ENCODE measurements at regions of chr16 and their contacts with region 1.

Region 1: DNA sequence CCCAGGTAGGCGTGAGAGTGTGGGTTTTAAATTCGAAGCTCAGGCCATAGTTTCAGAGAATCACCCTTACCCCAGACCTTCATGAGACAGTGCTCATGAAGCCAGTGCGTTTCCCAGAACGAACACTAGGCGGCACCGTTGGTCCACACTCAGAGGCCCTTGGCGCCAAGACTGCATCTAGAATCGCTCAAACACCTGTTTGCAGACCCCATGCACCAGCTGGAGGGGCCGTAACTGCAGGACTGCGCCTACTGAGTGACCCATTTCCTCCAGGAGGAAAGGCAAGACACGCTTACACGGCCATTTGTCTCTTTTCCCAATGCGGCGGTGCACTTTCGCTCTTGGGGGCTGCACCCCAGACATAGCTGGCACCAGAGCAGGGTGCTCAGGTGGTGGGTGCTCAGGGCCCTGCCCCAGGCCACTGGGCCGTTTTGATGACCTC is 34.0 kb downstream of the ADGRG5 start:
- DNase-seq: peak; percentile 69 to 79 (median 73)
- H3K4me3 ChIP-seq: no peak overlapping the region
- H3K4me3 Mint-ChIP-seq: peak overlapping the region in 2 of 8 donors; percentile 21 to 27
- H3K27ac ChIP-seq: no peak overlapping the region
- H3K27ac Mint-ChIP-seq: peak overlapping the region in 5 of 7 donors; percentile 6 to 65 (median 42)
- H3K4me1 ChIP-seq: peaks cover 30% of the 10 kb centered on the region
- H3K4me1 Mint-ChIP-seq: peaks cover 15 to 43% (median 31%) of the 10 kb centered on the region in 4 donors
- H3K27me3 ChIP-seq: no peaks in the 10 kb centered on the region
- H3K27me3 Mint-ChIP-seq: no peaks in the 10 kb centered on the region

Region 2: GRCh38 chr16:57128771-57129389 is 447.6 kb before region 1 on chr16:
- CTCF ChIA-PET with region 1: no interaction called
- POLR2A ChIA-PET with region 1: no interaction called
- intact Hi-C with region 1: no loop called
- DNase-seq: peak; percentile 28 to 70 (median 32)
- H3K4me3 ChIP-seq: no peak overlapping the region
- H3K4me3 Mint-ChIP-seq: peak overlapping the region in 7 of 8 donors; percentile 14 to 82 (median 66)
- H3K27ac ChIP-seq: peak overlapping the region; percentile 49
- H3K27ac Mint-ChIP-seq: peak overlapping the region; percentile 17 to 95 (median 79)
- H3K4me1 ChIP-seq: peaks cover 89% of the 10 kb centered on the region
- H3K4me1 Mint-ChIP-seq: peaks cover 49 to 97% (median 74%) of the 10 kb centered on the region in 4 donors
- H3K27me3 ChIP-seq: no peaks in the 10 kb centered on the region
- H3K27me3 Mint-ChIP-seq: no peaks in the 10 kb centered on the region

Region 3: GRCh38 chr16:57564571-57565270 is 11.7 kb before region 1 on chr16:
- CTCF ChIA-PET with region 1: interaction called, 25 read pairs
- POLR2A ChIA-PET with region 1: no interaction called
- intact Hi-C with region 1: no loop called
- DNase-seq: no peak
- H3K4me3 ChIP-seq: no peak overlapping the region
- H3K4me3 Mint-ChIP-seq: no peak overlapping the region
- H3K27ac ChIP-seq: no peak overlapping the region
- H3K27ac Mint-ChIP-seq: peak overlapping the region in 3 of 7 donors; percentile 18 to 41 (median 31)
- H3K4me1 ChIP-seq: no peaks in the 10 kb centered on the region
- H3K4me1 Mint-ChIP-seq: no peaks in the 10 kb centered on the region
- H3K27me3 ChIP-seq: no peaks in the 10 kb centered on the region
- H3K27me3 Mint-ChIP-seq: peaks cover 0 to 4% of the 10 kb centered on the region in 2 donors

Region 4: GRCh38 chr16:57600048-57600835 is 23.8 kb after region 1 on chr16:
- CTCF ChIA-PET with region 1: interaction called, 22 read pairs
- POLR2A ChIA-PET with region 1: interaction called, 4 read pairs
- intact Hi-C with region 1: no loop called
- DNase-seq: no peak
- H3K4me3 ChIP-seq: no peak overlapping the region
- H3K4me3 Mint-ChIP-seq: peak overlapping the region in 1 of 8 donors; percentile 50
- H3K27ac ChIP-seq: no peak overlapping the region
- H3K27ac Mint-ChIP-seq: peak overlapping the region in 6 of 7 donors; percentile 10 to 68 (median 44)
- H3K4me1 ChIP-seq: peaks cover 43% of the 10 kb centered on the region
- H3K4me1 Mint-ChIP-seq: peaks cover 23 to 59% (median 36%) of the 10 kb centered on the region in 4 donors
- H3K27me3 ChIP-seq: no peaks in the 10 kb centered on the region
- H3K27me3 Mint-ChIP-seq: no peaks in the 10 kb centered on the region

Region 5: DNA sequence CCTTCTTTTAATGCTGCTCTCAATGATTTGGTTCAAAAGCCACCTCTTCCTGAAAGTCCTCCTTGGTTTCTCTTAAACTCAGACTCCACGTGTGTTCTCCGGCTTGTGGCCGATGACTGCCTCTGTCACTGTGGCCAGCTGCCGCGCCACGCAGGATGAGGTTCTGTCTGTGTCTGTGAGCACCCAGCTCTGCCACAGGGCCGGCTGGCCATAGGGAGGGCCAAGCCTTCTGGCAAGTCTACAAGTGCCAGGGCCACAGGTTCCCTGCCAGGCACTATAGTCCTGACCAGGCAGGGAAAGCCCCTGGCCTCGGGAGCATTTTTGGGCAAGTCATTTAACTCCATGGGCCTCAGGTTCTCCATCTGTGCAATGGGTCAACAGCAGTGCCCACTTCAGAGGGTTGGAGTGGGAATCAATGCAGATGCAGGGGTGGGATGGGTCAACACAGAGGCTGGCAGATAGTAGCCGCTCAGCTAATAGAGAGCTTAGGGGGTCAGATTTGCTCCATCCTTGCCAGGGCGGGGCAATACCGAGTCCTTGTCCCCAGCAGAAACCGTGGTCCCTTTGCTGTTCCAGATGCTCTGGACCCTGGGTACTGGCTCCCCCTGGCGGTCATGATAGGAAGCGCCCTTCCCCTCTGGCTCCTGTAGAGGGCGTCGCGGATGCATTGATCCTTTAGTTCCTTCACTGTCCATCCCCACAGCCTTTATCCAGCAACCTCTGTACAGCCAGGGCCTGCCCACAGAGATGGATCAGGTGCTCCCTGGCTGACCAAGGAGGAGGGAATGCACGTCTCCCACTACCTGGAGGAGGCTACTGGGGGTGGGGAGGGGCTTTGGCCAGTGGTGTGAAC is 72.4 kb after region 1 on chr16:
- CTCF ChIA-PET with region 1: interaction called, 190 read pairs
- POLR2A ChIA-PET with region 1: interaction called, 3 read pairs
- intact Hi-C with region 1: loop called (anchors 1 kb)
- DNase-seq: peak; percentile 78 to 85 (median 80)
- H3K4me3 ChIP-seq: no peak overlapping the region
- H3K4me3 Mint-ChIP-seq: peak overlapping the region in 1 of 8 donors; percentile 3
- H3K27ac ChIP-seq: no peak overlapping the region
- H3K27ac Mint-ChIP-seq: peak overlapping the region in 4 of 7 donors; percentile 29 to 79 (median 64)
- H3K4me1 ChIP-seq: peaks cover 26% of the 10 kb centered on the region
- H3K4me1 Mint-ChIP-seq: peaks cover 15 to 32% (median 23%) of the 10 kb centered on the region in 4 donors
- H3K27me3 ChIP-seq: no peaks in the 10 kb centered on the region
- H3K27me3 Mint-ChIP-seq: no peaks in the 10 kb centered on the region

Region 6: GRCh38 chr16:57757326-57757786 is 180.9 kb after region 1 on chr16:
- CTCF ChIA-PET with region 1: interaction called, 5 read pairs
- POLR2A ChIA-PET with region 1: no interaction called
- intact Hi-C with region 1: loop called (anchors 5 kb)
- DNase-seq: peak; percentile 80 to 88 (median 81)
- H3K4me3 ChIP-seq: no peak overlapping the region
- H3K4me3 Mint-ChIP-seq: no peak overlapping the region
- H3K27ac ChIP-seq: no peak overlapping the region
- H3K27ac Mint-ChIP-seq: no peak overlapping the region
- H3K4me1 ChIP-seq: no peaks in the 10 kb centered on the region
- H3K4me1 Mint-ChIP-seq: peaks cover 0 to 3% (median 0%) of the 10 kb centered on the region in 4 donors
- H3K27me3 ChIP-seq: no peaks in the 10 kb centered on the region
- H3K27me3 Mint-ChIP-seq: no peaks in the 10 kb centered on the region

Region 7: GRCh38 chr16:58000706-58001676 is 424.5 kb after region 1 on chr16 and contains the start of gene USB1:
- CTCF ChIA-PET with region 1: no interaction called
- POLR2A ChIA-PET with region 1: no interaction called
- intact Hi-C with region 1: loop called (anchors 2 kb)
- DNase-seq: peak; percentile 81 to 90 (median 85)
- H3K4me3 ChIP-seq: peak within 1 kb of the TSS; percentile 76 to 93
- H3K4me3 Mint-ChIP-seq: peak within 1 kb of the TSS; percentile 90 to 95 (median 92)
- H3K27ac ChIP-seq: peak within 1 kb of the TSS; percentile 75
- H3K27ac Mint-ChIP-seq: peak within 1 kb of the TSS; percentile 88 to 96 (median 94)
- H3K4me1 ChIP-seq: peaks cover 46% of the 10 kb centered on the region
- H3K4me1 Mint-ChIP-seq: peaks cover 40 to 75% (median 51%) of the 10 kb centered on the region in 4 donors
- H3K27me3 ChIP-seq: no peaks in the 10 kb centered on the region
- H3K27me3 Mint-ChIP-seq: no peaks in the 10 kb centered on the region
- total RNA-seq, gene USB1: 36.4 to 39.5 TPM